ENCODE measurements at regions of chr17 and their contacts with region 1.

Region 1: DNA sequence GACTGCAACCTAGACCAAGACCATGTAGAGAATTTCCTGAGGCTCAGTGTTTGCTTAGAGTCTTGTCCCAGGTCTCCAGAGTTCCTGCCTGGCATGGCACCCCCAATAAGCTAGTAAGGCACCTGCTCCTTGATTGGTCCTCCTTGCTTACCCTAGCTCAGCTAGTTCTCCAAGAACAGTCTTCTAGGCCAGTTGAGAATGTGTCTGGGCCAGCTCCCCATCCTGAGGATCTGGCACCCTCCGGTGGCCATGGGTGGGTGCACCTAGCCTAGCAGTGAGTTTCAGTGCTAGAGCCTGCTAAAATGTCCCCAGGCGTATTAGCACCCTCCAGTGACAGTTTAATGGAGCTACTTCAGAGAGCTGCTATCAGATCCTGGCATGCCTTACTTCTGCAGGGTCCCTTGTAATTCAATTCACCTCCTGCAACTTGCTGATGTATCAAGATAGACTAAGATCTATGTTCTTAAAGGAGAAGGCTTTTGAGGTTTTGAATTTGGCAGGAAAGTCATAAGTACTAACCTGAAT is 44.4 kb upstream of the MED13 start:
- H3K4me3 ChIP-seq: no peak overlapping the region
- H3K27ac ChIP-seq: no peak overlapping the region
- H3K4me1 ChIP-seq: peaks cover 2% of the 10 kb centered on the region
- CTCF ChIP-seq: peak; percentile 89

Region 2: DNA sequence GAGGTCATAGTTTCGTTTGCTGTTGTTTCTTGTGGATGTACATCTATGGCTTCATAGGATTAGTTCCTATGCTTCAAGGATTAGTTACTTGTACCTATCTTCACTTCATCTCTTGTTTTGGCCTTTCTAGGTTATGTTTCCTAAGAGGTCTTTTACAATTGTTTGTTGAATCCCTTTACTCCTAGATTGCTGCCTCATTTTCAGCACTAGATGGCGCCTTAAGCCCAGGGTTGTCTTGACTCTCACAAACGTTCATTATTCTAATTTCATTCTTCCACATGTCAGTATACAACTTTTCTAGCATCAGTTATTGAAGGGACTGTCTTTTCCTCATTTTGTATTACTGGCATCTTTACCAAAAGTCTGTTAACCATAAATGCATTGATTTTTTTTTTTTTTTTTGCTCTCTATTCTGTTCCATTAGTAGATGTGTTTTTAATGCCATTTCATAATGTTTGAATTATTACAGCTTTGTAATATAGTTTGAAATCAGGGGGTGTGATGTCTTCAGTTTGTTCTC is 473.5 kb before region 1 on chr17:
- CTCF ChIA-PET with region 1: interaction called, 28 read pairs
- POLR2A ChIA-PET with region 1: no interaction called
- H3K4me3 ChIP-seq: no peak overlapping the region
- H3K27ac ChIP-seq: no peak overlapping the region
- H3K4me1 ChIP-seq: no peaks in the 10 kb centered on the region
- CTCF ChIP-seq: peak; percentile 34; the same call in 1 of the 2 replicates

Region 3: GRCh38 chr17:61862975-61863800 is 246.3 kb before region 1 on chr17 and contains the start of gene BRIP1:
- CTCF ChIA-PET with region 1: interaction called, 11 read pairs
- POLR2A ChIA-PET with region 1: no interaction called
- H3K4me3 ChIP-seq: peak within 1 kb of the TSS; percentile 72
- H3K27ac ChIP-seq: peak within 1 kb of the TSS; percentile 94
- H3K4me1 ChIP-seq: peaks cover 13% of the 10 kb centered on the region
- CTCF ChIP-seq: no peak; the same call in 1 of the 2 replicates

Region 4: DNA sequence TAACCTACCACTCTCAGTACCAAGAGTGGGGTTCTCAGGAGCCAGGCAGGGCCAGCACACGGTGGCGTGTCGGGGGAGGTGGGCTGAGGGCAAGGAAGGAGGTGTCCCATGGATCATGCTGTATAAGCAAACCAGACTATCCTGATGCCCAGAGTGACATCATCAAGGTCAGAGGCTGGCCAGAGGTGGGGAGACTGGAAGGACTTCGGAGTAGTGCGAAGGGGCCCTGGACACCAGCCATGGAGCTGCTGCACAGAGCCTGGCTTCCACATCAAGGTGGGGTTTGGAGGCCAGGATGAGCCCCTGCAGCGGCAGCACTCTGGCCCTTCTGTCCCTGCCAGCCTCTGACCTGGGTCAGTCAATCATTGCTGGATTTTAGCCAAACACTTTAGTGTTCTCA is 79.2 kb before region 1 on chr17:
- CTCF ChIA-PET with region 1: no interaction called
- POLR2A ChIA-PET with region 1: no interaction called
- H3K4me3 ChIP-seq: no peak overlapping the region
- H3K27ac ChIP-seq: no peak overlapping the region
- H3K4me1 ChIP-seq: no peaks in the 10 kb centered on the region
- CTCF ChIP-seq: no peak

Region 5: DNA sequence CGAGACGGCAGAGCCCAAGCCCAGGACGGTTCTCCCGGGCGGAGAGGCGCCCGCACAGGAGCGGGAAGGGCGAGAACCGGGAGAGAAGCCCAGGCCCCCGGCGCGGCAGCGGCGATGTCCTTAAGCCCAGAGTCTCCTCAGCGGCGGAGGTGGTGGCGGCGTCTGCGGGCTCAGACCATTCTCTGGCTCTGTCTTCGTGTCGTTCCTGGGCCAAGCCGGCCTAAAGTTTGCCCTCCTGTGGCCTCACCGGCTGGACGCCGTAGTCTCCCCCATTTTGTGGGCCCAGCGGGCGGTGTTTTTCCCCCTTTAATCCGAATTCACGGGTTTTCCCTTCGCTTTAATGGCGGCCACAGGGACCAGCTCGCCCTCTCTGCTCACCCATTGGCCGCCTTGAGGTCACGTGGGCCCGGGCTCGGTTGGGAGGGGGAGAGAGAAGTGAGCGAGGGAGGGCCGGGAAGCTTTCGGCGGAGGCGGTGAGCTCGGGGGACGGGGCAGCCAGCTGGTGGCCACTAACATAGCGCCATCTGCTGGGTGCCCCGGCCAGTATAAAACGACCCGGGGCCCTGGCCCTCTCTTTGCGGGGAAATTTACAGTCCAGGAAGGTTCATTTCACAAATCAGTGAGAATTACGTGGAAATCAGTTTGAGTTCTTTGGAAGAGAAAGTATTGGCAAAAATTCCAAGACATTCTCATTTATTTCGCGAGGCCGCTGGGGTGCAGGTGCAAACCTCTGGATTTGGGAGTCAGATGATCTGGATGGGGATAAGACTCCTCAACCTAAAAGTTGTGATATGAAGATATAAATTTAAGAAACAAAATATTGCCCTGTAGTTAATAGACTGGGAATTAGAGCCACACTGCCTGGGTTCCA is 43.6 kb before region 1 on chr17:
- CTCF ChIA-PET with region 1: interaction called, 16 read pairs
- POLR2A ChIA-PET with region 1: interaction called, 3 read pairs
- H3K4me3 ChIP-seq: peak overlapping the region; percentile 97
- H3K27ac ChIP-seq: peak overlapping the region; percentile 92
- H3K4me1 ChIP-seq: peaks cover 13% of the 10 kb centered on the region
- CTCF ChIP-seq: peak; percentile 89

Region 6: DNA sequence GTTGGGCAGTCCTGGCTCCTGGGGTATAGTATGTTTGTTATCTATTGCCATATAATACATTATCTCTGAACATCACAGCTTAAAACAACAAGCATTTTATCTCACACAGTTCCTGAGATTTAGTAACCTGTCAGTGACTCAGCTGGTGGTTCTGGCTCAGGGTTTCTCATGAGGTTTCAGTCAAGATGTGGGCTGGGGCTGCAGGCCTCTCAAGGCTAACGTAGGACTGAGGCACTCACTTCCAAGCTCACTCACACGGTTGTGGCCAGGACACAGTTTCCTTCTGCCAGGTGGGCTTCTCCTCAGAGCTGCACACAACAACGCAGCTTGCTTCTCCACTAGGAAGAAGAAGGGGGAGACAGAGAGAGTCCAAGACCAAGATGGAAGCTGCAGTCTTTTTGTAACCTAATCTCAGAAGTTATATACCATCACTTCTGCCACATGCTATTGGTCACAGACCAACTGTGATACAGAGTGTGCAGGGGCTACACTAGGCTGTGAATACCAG is 34.1 kb before region 1 on chr17:
- CTCF ChIA-PET with region 1: interaction called, 16 read pairs
- POLR2A ChIA-PET with region 1: no interaction called
- H3K4me3 ChIP-seq: no peak overlapping the region
- H3K27ac ChIP-seq: no peak overlapping the region
- H3K4me1 ChIP-seq: no peaks in the 10 kb centered on the region
- CTCF ChIP-seq: no peak

Region 7: DNA sequence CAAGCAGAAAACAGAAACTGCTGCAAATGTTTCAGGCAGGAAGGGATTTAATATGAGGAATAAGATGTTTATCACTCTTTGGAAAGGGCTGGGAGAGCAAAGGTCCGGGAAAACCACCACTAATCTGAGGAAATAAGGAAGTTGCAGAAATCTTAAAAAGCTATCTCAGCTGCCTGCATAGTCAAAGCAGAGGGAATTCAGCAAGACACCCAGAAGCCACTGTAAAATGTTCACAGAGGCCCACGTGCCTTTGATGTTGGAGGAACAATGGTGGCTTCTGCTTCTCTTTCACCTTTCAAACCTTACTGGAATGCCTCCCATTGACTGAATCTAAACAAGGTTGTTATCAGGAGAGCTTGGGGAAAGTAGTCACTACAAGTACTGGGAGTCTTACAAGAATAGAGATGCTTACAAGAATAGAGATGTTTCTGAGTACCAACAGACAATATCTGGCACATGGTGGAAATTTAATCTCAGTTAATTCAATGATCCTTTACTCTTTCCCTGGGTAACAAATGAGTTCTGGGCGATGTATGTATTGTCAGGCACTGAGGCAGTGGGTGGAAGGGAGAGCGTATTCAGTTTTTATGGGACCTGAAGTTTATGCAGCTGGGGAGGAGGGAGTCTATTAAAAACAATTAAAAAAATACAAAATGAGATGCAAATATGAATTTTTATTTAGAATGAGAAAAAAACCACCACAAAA is 11.7 kb after region 1 on chr17:
- CTCF ChIA-PET with region 1: interaction called, 21 read pairs
- POLR2A ChIA-PET with region 1: no interaction called
- H3K4me3 ChIP-seq: no peak overlapping the region
- H3K27ac ChIP-seq: no peak overlapping the region
- H3K4me1 ChIP-seq: no peaks in the 10 kb centered on the region
- CTCF ChIP-seq: no peak